ENCODE measurements at regions of chr11 and their contacts with region 1.

Region 1: GRCh38 chr11:125568970-125569914 is at the start of gene EI24:
- DNase-seq: peak; percentile 93
- ATAC-seq: peak; percentile 99
- H3K4me3 ChIP-seq: peak within 1 kb of the TSS; percentile 68 to 91 (median 80)
- H3K4me3 Mint-ChIP-seq: peak within 1 kb of the TSS; percentile 96
- H3K27ac ChIP-seq: peak within 1 kb of the TSS; percentile 52 to 86
- H3K27ac Mint-ChIP-seq: peak within 1 kb of the TSS; percentile 91
- H3K4me1 ChIP-seq: peaks cover 11 to 16% of the 10 kb centered on the region in 2 donors
- H3K4me1 Mint-ChIP-seq: peaks cover 18% of the 10 kb centered on the region
- H3K27me3 ChIP-seq: no peaks in the 10 kb centered on the region
- H3K27me3 Mint-ChIP-seq: no peaks in the 10 kb centered on the region
- CTCF ChIP-seq: peak; percentile 68
- total RNA-seq, gene EI24: 20.2 and 21.9 TPM in 2 replicates

Region 2: DNA sequence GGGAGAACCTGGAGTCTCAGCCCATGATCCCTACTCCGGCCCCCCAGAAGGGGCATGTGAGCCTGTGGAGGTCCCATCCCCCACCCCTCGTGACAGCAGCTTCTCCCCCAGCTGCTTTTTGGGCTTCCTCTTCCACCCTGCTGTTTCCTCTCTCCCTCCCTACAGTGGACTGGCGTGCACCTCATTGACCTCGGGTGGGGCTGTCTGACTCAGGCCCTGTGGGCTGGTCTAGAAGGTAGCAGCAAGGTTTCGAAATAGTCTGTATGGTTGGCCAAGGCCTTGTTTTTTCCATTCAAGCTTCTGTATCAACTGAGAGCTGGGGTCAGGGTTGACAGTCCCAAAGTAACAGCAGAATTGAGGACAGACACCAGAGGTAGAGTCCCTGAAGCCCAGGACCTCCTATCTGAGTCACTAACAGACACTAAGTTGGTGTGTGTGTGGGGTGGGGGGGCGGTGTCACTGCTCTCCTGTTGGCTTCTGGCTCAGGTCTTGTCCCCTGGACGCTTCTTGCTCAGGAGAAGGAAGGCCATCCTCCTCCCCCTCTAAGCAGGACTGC is 498.5 kb before region 1 on chr11:
- CTCF ChIA-PET with region 1: no interaction called
- POLR2A ChIA-PET with region 1: no interaction called
- intact Hi-C with region 1: loop called (anchors 10 kb)
- DNase-seq: peak; percentile 74
- ATAC-seq: peak; percentile 74
- H3K4me3 ChIP-seq: peak overlapping the region in 1 of 5 experiments; percentile 10
- H3K4me3 Mint-ChIP-seq: peak overlapping the region; percentile 64
- H3K27ac ChIP-seq: peak overlapping the region; percentile 61 to 66
- H3K27ac Mint-ChIP-seq: peak overlapping the region; percentile 89
- H3K4me1 ChIP-seq: peaks cover 47 to 59% of the 10 kb centered on the region in 2 donors
- H3K4me1 Mint-ChIP-seq: peaks cover 59% of the 10 kb centered on the region
- H3K27me3 ChIP-seq: no peaks in the 10 kb centered on the region
- H3K27me3 Mint-ChIP-seq: no peaks in the 10 kb centered on the region
- CTCF ChIP-seq: no peak

Region 3: GRCh38 chr11:125514336-125515101 is 54.7 kb before region 1 on chr11:
- CTCF ChIA-PET with region 1: no interaction called
- POLR2A ChIA-PET with region 1: no interaction called
- intact Hi-C with region 1: loop called (anchors 1 kb)
- DNase-seq: peak; percentile 87
- ATAC-seq: peak; percentile 76
- H3K4me3 ChIP-seq: peak overlapping the region in 1 of 5 experiments; percentile 32
- H3K4me3 Mint-ChIP-seq: peak overlapping the region; percentile 69
- H3K27ac ChIP-seq: peak overlapping the region; percentile 42 to 78
- H3K27ac Mint-ChIP-seq: peak overlapping the region; percentile 88
- H3K4me1 ChIP-seq: peaks cover 24 to 26% of the 10 kb centered on the region in 2 donors
- H3K4me1 Mint-ChIP-seq: peaks cover 34% of the 10 kb centered on the region
- H3K27me3 ChIP-seq: peaks cover 0 to 3% (median 0%) of the 10 kb centered on the region in 4 experiments
- H3K27me3 Mint-ChIP-seq: no peaks in the 10 kb centered on the region
- CTCF ChIP-seq: no peak

Measured in B cell (primary cell).